ENCODE measurements at regions of chr13 and their contacts with region 1.

Region 1: GRCh38 chr13:106418556-106418955 is 116.9 kb downstream of the EFNB2 start:
- DNase-seq: no peak
- H3K4me3 ChIP-seq: no peak overlapping the region
- H3K27ac ChIP-seq: no peak overlapping the region
- H3K4me1 ChIP-seq: peaks cover 0 to 11% (median 5%) of the 10 kb centered on the region in 4 donors
- H3K27me3 ChIP-seq: no peaks in the 10 kb centered on the region
- CTCF ChIP-seq: no peak
- EP300 ChIP-seq: no peak
- POLR2A ChIP-seq: no peak

Region 2: DNA sequence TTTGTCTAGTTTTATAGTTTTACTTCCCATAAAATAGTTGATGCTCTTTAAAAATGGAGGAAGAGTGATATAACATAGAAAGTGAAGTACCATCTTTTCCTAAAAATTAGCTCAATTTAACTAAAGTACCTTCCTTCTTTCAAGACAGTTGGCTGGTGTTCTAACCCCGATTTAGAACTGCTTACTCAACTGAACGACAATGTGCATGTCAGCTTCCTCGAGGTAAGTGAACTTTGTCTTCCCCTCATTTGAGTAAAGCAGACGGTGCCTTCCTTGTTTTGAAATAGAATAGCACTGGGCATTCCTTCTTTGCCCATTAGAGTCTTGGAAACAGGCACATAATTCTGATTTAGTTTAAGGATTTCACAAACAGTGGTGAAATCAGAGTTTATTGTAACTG is 1402.3 kb before region 1 on chr13:
- in situ Hi-C with region 1: no loop called
- intact Hi-C with region 1: loop called (anchors 5 kb)
- DNase-seq: no peak
- H3K4me3 ChIP-seq: no peak overlapping the region
- H3K27ac ChIP-seq: no peak overlapping the region
- H3K4me1 ChIP-seq: no peaks in the 10 kb centered on the region
- H3K27me3 ChIP-seq: no peaks in the 10 kb centered on the region
- CTCF ChIP-seq: no peak
- EP300 ChIP-seq: no peak
- POLR2A ChIP-seq: no peak